ENCODE measurements at regions of chr11 and their contacts with region 1.

Region 1: GRCh38 chr11:57456960-57457642 is 3.2 kb upstream of the RTN4RL2 start:
- DNase-seq: no peak
- H3K4me3 ChIP-seq: no peak overlapping the region
- H3K27me3 ChIP-seq: peaks cover 27% of the 10 kb centered on the region
- CTCF ChIP-seq: peak; percentile 100

Region 2: GRCh38 chr11:57417056-57417455 is 40.0 kb before region 1 on chr11:
- CTCF ChIA-PET with region 1: interaction called, 15 read pairs
- POLR2A ChIA-PET with region 1: no interaction called
- DNase-seq: no peak
- H3K4me3 ChIP-seq: no peak overlapping the region
- H3K27me3 ChIP-seq: no peaks in the 10 kb centered on the region
- CTCF ChIP-seq: no peak

Region 3: DNA sequence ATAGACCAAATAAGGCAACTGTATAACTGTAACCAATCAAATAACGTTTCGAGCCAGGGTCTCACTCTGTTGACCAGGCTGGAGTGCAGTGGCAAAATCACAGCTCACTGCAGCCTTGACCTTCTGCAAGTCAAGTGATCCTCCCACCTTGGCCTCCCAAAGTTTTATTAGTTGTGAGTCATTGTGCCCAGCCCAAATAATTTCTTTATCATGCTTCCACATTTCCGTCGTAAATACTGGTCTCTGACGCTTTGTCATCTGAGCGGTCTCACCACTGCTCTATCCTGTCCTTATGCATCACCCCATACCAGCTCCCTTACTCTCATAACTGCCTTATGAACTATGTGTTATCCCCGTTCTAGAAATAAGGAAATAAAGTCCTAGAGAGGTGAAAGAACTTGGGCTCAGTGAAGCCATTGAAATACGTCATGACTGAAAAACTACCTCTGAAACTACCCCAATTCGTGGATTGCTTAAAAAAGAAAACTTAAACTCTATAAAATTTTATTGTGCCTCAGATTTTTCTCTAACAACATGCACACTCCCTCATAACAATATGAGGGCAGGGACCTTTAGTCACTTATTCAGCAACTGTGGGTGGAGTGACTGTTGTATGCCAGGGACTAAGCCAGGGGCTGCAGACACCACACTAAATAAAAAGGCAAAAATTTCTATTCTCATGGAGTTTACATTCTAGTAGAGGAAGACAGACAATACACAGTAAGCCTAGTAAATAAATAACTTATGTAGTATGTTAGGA is 12.6 kb before region 1 on chr11:
- CTCF ChIA-PET with region 1: interaction called, 22 read pairs
- POLR2A ChIA-PET with region 1: interaction called, 6 read pairs
- DNase-seq: no peak
- H3K4me3 ChIP-seq: no peak overlapping the region
- H3K27me3 ChIP-seq: no peaks in the 10 kb centered on the region
- CTCF ChIP-seq: no peak

Region 4: GRCh38 chr11:57474017-57474802 is 17.1 kb after region 1 on chr11:
- CTCF ChIA-PET with region 1: interaction called, 188 read pairs
- POLR2A ChIA-PET with region 1: no interaction called
- DNase-seq: no peak
- H3K4me3 ChIP-seq: no peak overlapping the region
- H3K27me3 ChIP-seq: peaks cover 10% of the 10 kb centered on the region
- CTCF ChIP-seq: no peak

Region 5: GRCh38 chr11:57493507-57494503 is 36.7 kb after region 1 on chr11:
- CTCF ChIA-PET with region 1: interaction called, 24 read pairs
- POLR2A ChIA-PET with region 1: no interaction called
- DNase-seq: no peak
- H3K4me3 ChIP-seq: no peak overlapping the region
- H3K27me3 ChIP-seq: no peaks in the 10 kb centered on the region
- CTCF ChIP-seq: peak; percentile 89

Region 6: GRCh38 chr11:57515332-57516060 is 58.4 kb after region 1 on chr11 and contains the start of gene SLC43A1:
- CTCF ChIA-PET with region 1: interaction called, 75 read pairs
- POLR2A ChIA-PET with region 1: no interaction called
- DNase-seq: no peak
- H3K4me3 ChIP-seq: peak within 1 kb of the TSS; percentile 79
- H3K27me3 ChIP-seq: no peaks in the 10 kb centered on the region
- CTCF ChIP-seq: no peak; the same call in 1 of the 2 replicates
- polyA plus RNA-seq, gene SLC43A1: 11.8 and 23.4 TPM in 2 replicates

Region 7: DNA sequence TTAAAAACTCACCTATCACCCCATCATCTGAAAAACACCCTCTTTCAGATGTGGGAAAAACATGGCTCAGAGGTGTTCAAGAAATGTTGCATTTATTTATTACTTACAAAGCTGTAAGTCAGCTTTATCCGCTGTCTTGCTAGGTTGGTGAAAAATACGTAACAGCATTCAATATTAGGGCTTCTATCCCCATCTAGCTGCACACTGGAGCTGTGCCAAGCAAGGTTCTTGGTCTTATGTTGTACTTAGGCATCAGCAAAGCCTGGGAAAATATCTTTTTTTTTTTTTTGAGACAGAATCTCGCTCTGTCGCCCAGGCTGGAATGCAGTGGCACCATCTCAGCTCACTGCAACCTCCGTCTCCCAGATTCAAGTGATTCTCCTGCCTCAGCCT is 147.9 kb after region 1 on chr11:
- CTCF ChIA-PET with region 1: no interaction called
- POLR2A ChIA-PET with region 1: no interaction called
- DNase-seq: no peak
- H3K4me3 ChIP-seq: no peak overlapping the region
- H3K27me3 ChIP-seq: no peaks in the 10 kb centered on the region
- CTCF ChIP-seq: no peak

Region 8: DNA sequence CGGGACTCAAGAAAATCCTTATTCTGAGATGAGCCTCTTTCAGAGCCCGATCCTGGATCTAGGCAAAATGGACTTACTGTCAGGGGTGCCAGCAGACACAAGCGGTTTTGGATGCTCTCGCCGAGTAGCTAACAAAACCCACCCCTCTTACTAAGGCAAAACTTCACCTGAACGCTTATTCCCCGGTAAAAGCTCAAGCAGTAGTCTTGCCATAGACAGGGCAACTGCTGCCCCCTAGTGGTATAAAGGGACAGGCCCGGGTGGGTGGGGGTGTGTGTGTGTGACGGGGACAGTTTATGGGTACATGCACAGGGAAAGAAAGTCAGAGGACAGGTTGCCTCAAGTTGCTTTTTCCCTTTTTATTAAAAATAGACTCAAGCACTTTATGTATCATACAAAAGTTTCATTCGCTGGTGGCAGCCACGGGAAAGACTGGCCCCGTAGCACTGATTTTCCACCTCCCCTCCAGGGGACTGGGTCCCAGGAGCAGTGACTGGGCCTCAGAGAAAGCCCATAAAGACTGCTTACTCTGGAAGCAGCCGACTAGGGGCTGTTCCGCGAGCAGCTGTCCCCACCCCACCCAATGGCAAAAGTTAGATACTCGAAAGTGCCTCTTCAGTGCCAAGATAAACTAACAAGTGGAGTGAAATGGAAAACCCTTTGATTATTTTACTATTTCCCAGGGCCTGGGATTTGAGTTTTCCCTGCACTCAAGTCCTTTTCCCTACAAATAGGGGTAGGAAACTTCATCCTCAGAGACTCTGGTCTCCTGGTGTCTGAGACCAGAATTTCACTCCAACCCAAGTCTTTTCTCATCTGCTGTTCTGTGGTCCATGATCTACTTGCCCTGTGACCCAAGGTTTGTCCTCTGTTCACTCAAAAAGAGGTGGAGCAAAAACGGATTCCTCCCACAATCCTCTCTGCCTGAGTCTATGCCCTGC is 187.9 kb after region 1 on chr11:
- CTCF ChIA-PET with region 1: interaction called, 11 read pairs
- POLR2A ChIA-PET with region 1: no interaction called
- DNase-seq: no peak
- H3K4me3 ChIP-seq: no peak overlapping the region
- H3K27me3 ChIP-seq: no peaks in the 10 kb centered on the region
- CTCF ChIP-seq: peak; percentile 91

Measured in BJ (cell line).